ENCODE measurements at regions of chr1 and their contacts with region 1.

Region 1: GRCh38 chr1:226302731-226303130 is 6.2 kb downstream of the LIN9 start:
- DNase-seq: no peak
- H3K4me3 ChIP-seq: no peak overlapping the region
- H3K27ac ChIP-seq: no peak overlapping the region
- H3K4me1 ChIP-seq: peaks cover 16% of the 10 kb centered on the region
- H3K27me3 ChIP-seq: no peaks in the 10 kb centered on the region
- CTCF ChIP-seq: no peak

Region 2: DNA sequence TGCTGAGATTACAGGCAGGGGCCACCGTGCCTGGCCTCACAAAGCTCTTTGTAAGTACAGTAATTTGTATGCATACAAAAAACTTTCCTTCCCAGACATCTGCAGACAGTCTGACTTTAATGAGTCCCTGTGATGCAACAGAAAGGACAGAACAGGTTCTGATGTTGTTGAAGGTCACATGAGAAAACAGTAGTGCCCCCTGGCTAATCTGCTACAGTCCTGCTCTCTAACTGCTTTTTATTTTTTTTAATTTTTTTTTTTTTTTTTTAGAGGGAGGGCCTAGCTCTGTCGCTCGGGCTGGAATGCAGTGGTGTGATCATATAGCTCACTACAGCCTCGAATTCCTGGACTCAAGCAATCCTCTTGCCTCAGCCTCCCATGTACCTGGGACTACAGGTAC is 152.9 kb before region 1 on chr1:
- CTCF ChIA-PET with region 1: interaction called, 15 read pairs
- POLR2A ChIA-PET with region 1: no interaction called
- intact Hi-C with region 1: no loop called
- DNase-seq: peak; percentile 22
- H3K4me3 ChIP-seq: no peak overlapping the region
- H3K27ac ChIP-seq: no peak overlapping the region
- H3K4me1 ChIP-seq: no peaks in the 10 kb centered on the region
- H3K27me3 ChIP-seq: no peaks in the 10 kb centered on the region
- CTCF ChIP-seq: no peak